Breast epithelium (tissue), 4 donors: ENCODE measurements at regions of chr5 and their contacts with region 1.

Region 1: GRCh38 chr5:152547202-152547601 is 142.1 kb upstream of the NMUR2 start:
- DNase-seq: no peak
- H3K4me3 ChIP-seq: no peak overlapping the region
- H3K27ac ChIP-seq: no peak overlapping the region
- H3K4me1 ChIP-seq: no peaks in the 10 kb centered on the region
- H3K27me3 ChIP-seq: peaks cover 0 to 6% of the 10 kb centered on the region in 2 donors
- CTCF ChIP-seq: no peak
- POLR2A ChIP-seq: no peak

Region 2: GRCh38 chr5:154534457-154535050 is 1987.4 kb after region 1 on chr5:
- intact Hi-C with region 1: loop called (anchors 5 kb)
- DNase-seq: no peak
- H3K4me3 ChIP-seq: no peak overlapping the region
- H3K27ac ChIP-seq: no peak overlapping the region
- H3K4me1 ChIP-seq: no peaks in the 10 kb centered on the region
- H3K27me3 ChIP-seq: no peaks in the 10 kb centered on the region
- CTCF ChIP-seq: no peak
- POLR2A ChIP-seq: no peak